Dendritic cell treated with granulocyte-macrophage colony-stimulating factor and Interleukin-4, amounts not matched to agents 40 ng/mL and 50 ng/mL, for 4 days (primary cell): ENCODE measurements at regions of chr7 and their contacts with region 1.

Region 1: DNA sequence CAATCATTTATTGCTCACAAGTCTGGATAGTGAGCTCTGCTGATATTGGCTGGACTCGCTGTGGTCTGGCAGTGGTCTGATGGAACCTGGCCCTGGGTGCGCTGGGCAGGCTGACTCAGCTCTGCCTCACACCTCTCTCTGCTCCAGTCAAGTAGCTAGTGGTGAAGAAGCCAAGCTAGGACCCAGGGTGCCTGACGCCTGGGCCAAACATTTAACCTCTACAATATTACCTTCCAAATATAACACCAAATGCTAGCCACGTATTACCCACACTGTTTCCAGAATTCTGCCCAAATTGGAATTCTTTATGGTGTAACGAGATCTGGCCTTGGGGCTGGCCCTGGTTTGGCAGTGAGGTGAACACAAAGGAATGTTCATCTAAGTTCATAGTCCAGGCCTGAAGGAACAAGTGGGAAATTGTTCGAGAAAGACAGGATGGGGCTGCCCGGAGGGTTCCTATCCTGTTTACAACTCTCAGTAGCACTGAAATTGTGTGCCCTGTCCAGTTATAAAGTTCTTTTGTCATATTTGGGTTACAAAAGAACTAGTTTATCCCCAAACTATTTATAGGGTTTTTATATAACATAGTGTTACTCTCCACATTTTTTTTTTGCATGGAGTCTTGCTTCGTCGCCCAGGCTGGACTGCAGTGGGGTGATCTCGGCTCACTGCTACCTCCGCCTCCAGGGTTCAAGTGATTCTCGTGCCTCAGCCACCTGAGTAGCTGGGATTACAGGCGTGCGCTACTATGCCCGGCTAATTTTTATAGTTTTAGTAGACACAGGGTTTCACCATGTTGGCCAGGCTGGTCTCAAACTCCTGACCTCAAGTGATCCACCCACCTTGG is 16.3 kb downstream of the OR2AE1 start:
- H3K4me3 Mint-ChIP-seq: no peak overlapping the region
- H3K27ac Mint-ChIP-seq: no peak overlapping the region
- H3K4me1 Mint-ChIP-seq: no peaks in the 10 kb centered on the region
- H3K27me3 Mint-ChIP-seq: peaks cover 11% of the 10 kb centered on the region

Region 2: DNA sequence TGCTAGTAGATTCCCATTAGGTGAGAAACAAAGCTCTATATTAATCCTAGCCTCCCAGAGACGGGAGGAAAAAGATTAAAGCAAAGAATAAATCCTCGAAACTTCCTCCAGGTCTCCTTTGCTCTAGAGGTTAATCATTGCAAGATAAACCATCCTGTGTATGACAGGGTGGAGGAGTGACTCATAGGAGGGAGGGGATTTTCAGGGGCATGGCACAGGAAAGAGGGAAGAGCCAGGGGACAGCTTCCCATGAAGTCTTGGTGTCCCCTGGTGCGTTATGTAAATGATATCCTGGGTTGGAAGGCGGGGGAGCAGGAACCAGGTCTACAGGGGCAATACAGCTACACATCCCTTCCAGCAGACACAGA is 181.5 kb before region 1 on chr7:
- intact Hi-C with region 1: no loop called
- H3K4me3 Mint-ChIP-seq: no peak overlapping the region
- H3K27ac Mint-ChIP-seq: no peak overlapping the region
- H3K4me1 Mint-ChIP-seq: peaks cover 6% of the 10 kb centered on the region
- H3K27me3 Mint-ChIP-seq: peaks cover 6% of the 10 kb centered on the region

Region 3: DNA sequence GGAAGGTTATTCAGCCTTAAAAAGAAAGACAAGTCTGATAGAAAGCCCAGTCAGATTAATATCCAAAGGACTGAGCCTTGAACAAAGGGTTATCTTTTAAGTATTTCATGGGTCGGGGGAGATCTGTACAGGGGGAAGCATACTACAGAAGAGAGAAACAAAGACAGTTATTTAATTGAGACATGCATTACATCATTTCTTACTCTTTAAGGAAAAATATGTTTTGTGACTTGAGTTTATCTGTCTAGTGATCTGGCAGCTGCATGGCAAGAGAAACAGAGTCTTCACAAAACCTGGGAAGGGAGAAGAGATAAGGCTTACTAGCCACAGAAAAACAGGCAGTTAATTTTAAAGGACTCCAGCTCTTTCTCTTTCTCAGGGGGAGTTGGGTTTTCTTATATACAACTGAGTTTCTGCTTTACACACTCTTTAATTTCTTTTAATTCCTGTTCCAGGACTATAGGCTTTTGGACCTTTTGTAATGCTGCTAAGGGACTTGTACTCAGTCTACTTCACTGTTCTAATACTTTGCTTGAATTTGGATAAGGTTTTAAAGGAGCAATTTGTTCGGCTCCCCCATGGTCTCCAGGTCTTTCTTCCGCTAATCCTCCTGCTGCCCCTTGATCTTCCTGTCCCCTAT is 53.5 kb before region 1 on chr7:
- intact Hi-C with region 1: loop called (anchors 10 kb)
- H3K4me3 Mint-ChIP-seq: no peak overlapping the region
- H3K27ac Mint-ChIP-seq: no peak overlapping the region
- H3K4me1 Mint-ChIP-seq: no peaks in the 10 kb centered on the region
- H3K27me3 Mint-ChIP-seq: peaks cover 15% of the 10 kb centered on the region

Region 4: GRCh38 chr7:99897322-99898022 is 37.0 kb after region 1 on chr7:
- intact Hi-C with region 1: no loop called
- H3K4me3 Mint-ChIP-seq: no peak overlapping the region
- H3K27ac Mint-ChIP-seq: no peak overlapping the region
- H3K4me1 Mint-ChIP-seq: peaks cover 7% of the 10 kb centered on the region
- H3K27me3 Mint-ChIP-seq: no peaks in the 10 kb centered on the region